PC-9 (cell line): ENCODE measurements at regions of chr3 and their contacts with region 1.

Region 1: GRCh38 chr3:30693470-30694120 is 87.2 kb downstream of the TGFBR2 start:
- DNase-seq: peak; percentile 35 to 49
- H3K4me3 ChIP-seq: no peak overlapping the region
- H3K27ac ChIP-seq: no peak overlapping the region
- H3K4me1 ChIP-seq: peaks cover 15% of the 10 kb centered on the region
- H3K27me3 ChIP-seq: no peaks in the 10 kb centered on the region
- CTCF ChIP-seq: peak; percentile 76

Region 2: DNA sequence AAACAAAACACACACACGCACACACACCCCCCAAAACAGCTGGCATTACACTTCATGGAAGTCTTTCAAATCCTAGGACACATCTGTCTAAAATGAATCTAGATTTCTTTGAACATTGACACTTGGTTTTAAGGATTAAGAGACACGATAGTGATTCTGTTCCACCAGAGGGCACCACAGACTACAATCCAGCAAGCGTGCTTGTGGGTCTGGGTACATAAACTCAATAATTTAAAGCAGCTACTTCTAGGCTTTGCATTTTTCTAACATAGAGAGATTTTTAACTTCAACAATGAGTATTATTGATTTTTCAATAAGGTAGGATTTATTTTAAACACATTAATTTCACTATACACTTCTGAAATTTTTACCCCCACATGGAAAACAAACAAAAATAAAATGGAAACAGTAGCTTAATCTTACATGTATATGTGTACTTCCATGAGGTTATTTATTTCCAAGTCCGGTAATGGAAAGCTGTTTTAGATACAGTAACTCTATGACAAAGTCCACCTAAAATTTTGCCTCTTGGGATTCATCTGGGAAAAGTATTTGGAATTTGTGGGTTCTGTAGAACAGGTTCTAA is 651.2 kb before region 1 on chr3:
- CTCF ChIA-PET with region 1: interaction called, 5 read pairs
- POLR2A ChIA-PET with region 1: no interaction called
- intact Hi-C with region 1: loop called (anchors 1 kb)
- DNase-seq: peak; percentile 30 to 48
- H3K4me3 ChIP-seq: no peak overlapping the region
- H3K27ac ChIP-seq: no peak overlapping the region
- H3K4me1 ChIP-seq: no peaks in the 10 kb centered on the region
- H3K27me3 ChIP-seq: no peaks in the 10 kb centered on the region
- CTCF ChIP-seq: peak; percentile 72

Region 3: DNA sequence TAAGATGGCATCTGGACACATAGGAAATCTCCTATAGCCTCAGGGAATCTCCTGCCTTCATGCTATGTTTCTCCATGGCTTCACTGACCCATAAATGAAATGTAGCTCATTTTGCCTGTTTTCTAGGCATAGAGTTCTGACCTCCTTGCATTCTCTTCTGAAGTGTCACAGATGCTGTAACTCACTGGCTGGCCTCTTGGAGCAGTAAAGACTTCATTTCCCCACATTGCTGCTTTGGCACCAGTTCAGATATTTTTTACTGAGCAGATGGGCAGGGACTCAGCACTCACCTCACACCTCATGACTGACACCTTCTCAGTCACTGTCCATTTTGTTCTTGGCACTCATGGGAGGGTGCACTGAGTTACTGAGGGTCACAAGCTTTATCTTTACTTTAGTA is 373.9 kb before region 1 on chr3:
- CTCF ChIA-PET with region 1: interaction called, 4 read pairs
- POLR2A ChIA-PET with region 1: no interaction called
- intact Hi-C with region 1: loop called (anchors 2 kb)
- DNase-seq: peak; percentile 40 to 61
- H3K4me3 ChIP-seq: no peak overlapping the region
- H3K27ac ChIP-seq: no peak overlapping the region
- H3K4me1 ChIP-seq: no peaks in the 10 kb centered on the region
- H3K27me3 ChIP-seq: no peaks in the 10 kb centered on the region
- CTCF ChIP-seq: 0 out of 2 replicates have a peak, but pooled peaks have one; percentile 33

Region 4: DNA sequence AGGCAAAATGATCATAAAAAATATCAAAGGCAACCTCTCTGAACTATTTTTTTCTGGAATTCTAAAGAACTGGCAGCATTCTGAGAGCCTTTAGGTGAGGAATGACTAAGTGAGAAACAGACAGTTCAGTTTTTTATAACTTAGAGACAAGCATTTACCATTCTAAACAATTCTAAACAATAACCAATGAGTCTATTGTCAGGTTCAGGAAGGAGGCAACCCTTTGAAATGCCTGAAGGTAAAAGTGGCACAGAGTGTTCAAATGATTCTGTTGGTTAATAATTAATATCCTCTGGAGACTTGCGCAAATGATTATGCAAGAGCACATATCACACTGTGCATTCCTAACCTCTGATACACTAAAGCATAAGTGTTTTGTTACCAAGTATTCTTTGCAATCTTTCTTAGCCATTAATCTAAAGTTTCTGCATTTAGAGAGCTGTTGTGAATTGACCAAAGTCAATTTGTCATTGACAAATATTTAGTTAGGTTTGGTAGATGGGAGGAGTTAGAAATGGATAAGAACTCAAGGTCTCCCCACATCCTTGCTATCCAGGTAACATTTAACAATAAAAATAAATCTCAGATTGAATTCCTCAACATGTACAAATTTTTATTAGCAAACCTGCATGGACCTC is 96.3 kb before region 1 on chr3:
- CTCF ChIA-PET with region 1: no interaction called
- POLR2A ChIA-PET with region 1: no interaction called
- intact Hi-C with region 1: loop called (anchors 2 kb)
- DNase-seq: peak; percentile 47 to 94
- H3K4me3 ChIP-seq: no peak overlapping the region
- H3K27ac ChIP-seq: peak overlapping the region; percentile 80
- H3K4me1 ChIP-seq: peaks cover 23% of the 10 kb centered on the region
- H3K27me3 ChIP-seq: no peaks in the 10 kb centered on the region
- CTCF ChIP-seq: no peak

Region 5: DNA sequence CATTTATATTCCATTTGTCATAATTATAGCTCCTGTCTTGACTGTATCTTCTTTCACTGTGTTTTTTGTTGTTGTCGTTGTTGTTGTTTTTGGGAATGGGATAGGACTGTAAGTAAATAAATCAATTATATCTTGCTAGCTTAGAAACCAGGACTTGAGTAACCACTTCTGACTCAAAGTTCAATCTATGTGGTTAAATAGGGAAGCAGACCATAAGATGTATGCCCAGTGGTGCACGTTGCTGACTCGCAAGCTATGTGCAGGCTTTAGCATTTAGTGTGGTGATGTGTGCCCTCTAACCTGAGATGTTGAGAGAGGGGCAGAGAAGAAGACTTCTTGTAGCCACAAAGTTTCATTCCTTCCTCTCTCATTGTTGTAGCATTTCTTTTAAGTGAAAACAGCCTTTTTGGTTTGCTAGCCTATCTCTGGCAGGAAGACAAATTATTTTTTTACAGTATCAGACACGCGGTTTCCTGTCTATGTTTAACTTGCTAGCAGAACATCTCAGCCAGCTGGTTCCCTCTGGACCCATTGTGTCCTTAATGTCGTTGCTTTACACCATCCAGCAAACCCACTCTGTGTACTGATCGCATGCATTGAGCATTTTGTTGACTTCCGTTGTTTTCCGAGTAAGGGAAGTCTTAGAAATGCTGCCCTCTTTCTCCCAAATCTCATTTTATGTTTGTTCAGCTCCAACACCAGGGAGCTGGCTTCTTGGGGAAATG is 35.1 kb before region 1 on chr3:
- CTCF ChIA-PET with region 1: interaction called, 4 read pairs
- POLR2A ChIA-PET with region 1: no interaction called
- intact Hi-C with region 1: loop called (anchors 2 kb)
- DNase-seq: peak; percentile 9 to 69
- H3K4me3 ChIP-seq: no peak overlapping the region
- H3K27ac ChIP-seq: peak overlapping the region; percentile 49
- H3K4me1 ChIP-seq: peaks cover 26% of the 10 kb centered on the region
- H3K27me3 ChIP-seq: no peaks in the 10 kb centered on the region
- CTCF ChIP-seq: no peak